Endothelial cell of umbilical vein (primary cell): ENCODE measurements at regions of chr3 and their contacts with region 1.

Region 1: DNA sequence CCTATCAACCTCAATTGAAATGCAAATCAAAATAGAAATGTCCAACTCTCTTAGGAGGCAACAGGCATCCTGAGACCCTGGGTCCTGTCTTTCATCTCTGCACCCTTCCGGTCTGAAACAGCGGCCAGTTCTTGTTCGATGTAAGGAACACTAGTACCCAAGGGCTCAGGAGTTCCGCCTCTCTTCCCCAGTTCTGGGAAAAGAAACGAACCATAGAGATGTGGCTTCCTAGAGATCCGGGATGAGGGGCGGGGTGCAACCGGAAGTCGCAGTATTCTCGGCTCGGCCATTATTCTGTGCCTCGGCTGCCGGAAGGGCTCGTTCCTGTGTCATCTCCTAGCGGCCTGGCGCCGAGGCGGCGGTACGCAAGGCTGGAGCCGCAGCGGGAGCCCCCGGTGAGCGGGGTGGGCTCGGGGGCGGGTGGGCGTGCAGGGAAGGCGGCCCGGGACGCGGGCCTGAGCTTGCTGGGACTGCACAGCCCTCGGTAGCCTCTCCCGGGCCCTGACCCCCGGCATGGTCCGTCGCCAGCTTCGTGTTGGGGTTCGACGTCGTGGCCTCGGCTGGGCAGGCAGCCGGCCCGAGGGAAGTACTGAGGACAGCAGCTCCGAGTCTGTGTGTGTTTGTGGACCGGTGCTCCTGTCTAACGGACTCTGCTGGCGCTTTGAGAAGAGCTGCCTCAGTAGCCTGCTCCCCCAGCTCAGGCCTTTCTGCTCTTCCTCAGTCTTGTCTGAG is at the start of gene ZNF197:
- DNase-seq: peak; percentile 70
- H3K4me3 ChIP-seq: peak within 1 kb of the TSS; percentile 13 to 69 (median 62)
- H3K27ac ChIP-seq: peak within 1 kb of the TSS; percentile 3
- H3K4me1 ChIP-seq: peaks cover 4% of the 10 kb centered on the region
- H3K27me3 ChIP-seq: no peaks in the 10 kb centered on the region
- CTCF ChIP-seq: no peak
- POLR2A ChIP-seq: peak; percentile 80
- total RNA-seq, gene ZNF197: 6.4 and 7.1 TPM in 2 replicates

Region 2: GRCh38 chr3:44477312-44478030 is 147.4 kb before region 1 on chr3 and contains the start of gene ZNF445:
- CTCF ChIA-PET with region 1: no interaction called
- POLR2A ChIA-PET with region 1: no interaction called
- dilution Hi-C with region 1: no loop called
- intact Hi-C with region 1: loop called (anchors 1 kb)
- DNase-seq: peak; percentile 78
- H3K4me3 ChIP-seq: peak within 1 kb of the TSS; percentile 61 to 98 (median 98)
- H3K27ac ChIP-seq: peak within 1 kb of the TSS; percentile 35
- H3K4me1 ChIP-seq: peaks cover 11% of the 10 kb centered on the region
- H3K27me3 ChIP-seq: no peaks in the 10 kb centered on the region
- CTCF ChIP-seq: no peak
- POLR2A ChIP-seq: peak; percentile 79
- total RNA-seq, gene ZNF445: 15.0 and 17.8 TPM in 2 replicates

Region 3: GRCh38 chr3:44510000-44510368 is 114.9 kb before region 1 on chr3:
- CTCF ChIA-PET with region 1: no interaction called
- POLR2A ChIA-PET with region 1: no interaction called
- dilution Hi-C with region 1: no loop called
- intact Hi-C with region 1: loop called (anchors 10 kb)
- DNase-seq: peak; percentile 49
- H3K4me3 ChIP-seq: peak overlapping the region; percentile 80 to 98 (median 88)
- H3K27ac ChIP-seq: peak overlapping the region; percentile 58
- H3K4me1 ChIP-seq: peaks cover 13% of the 10 kb centered on the region
- H3K27me3 ChIP-seq: no peaks in the 10 kb centered on the region
- CTCF ChIP-seq: no peak
- POLR2A ChIP-seq: no peak

Region 4: DNA sequence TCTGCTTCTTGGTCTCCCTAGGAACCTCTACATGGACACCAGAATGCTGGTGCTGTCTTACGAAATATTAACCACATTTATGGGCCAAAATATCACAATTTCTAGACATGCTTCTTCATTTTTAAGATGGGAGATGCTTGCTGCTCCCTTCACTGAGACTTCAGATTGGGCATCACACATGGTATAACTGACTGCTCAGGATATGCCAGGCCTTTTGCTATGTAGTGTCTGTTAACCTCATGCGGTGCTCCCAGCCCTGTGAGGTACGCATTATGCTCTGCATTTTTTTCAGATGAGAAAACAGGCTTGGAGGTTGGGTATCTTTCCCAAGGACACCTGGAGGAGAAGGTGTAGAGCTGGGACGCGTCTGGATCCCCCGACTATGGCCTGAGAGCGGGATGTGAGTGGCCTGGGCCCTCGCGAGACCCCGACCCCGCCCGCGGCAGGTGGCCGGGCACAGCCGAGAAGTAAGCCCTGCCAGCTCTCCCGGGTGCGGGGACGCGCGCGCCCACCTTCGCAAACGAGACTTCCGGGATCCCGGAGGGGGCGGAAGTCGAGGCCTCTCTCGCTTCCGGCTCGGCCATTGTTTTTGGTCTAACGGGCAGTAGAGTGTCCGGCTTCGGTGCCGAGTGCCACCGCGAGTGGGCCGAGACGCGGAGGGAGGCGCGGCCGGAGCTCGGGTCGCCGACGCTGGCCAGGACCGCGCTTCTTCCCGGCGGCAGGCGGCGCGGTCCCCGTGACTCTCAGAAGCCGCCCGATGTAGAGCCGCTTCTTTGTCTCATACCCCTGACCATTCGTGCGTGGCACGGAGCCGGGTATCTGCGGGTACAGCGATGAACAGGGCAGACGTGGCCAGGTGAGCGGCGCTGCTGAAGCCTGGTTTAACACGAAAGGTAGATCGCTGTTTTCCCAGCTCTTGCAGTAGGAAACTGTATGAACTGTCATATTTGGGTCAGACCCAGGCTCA is 70.0 kb before region 1 on chr3 and contains the start of gene ZKSCAN7:
- CTCF ChIA-PET with region 1: interaction called, 3 read pairs
- POLR2A ChIA-PET with region 1: no interaction called
- dilution Hi-C with region 1: no loop called
- intact Hi-C with region 1: loop called (anchors 2 kb)
- DNase-seq: peak; percentile 42
- H3K4me3 ChIP-seq: peak within 1 kb of the TSS; percentile 78 to 87 (median 82)
- H3K27ac ChIP-seq: no peak within 1 kb of the TSS
- H3K4me1 ChIP-seq: peaks cover 11% of the 10 kb centered on the region
- H3K27me3 ChIP-seq: no peaks in the 10 kb centered on the region
- CTCF ChIP-seq: peak in 1 of 2 donors; percentile 39
- POLR2A ChIP-seq: peak; percentile 48
- total RNA-seq, gene ZKSCAN7: 0.95 and 1.9 TPM in 2 replicates

Region 5: GRCh38 chr3:44648564-44649229 is 23.8 kb after region 1 on chr3 and contains the start of gene ZNF35:
- CTCF ChIA-PET with region 1: interaction called, 5 read pairs
- POLR2A ChIA-PET with region 1: interaction called, 4 read pairs
- dilution Hi-C with region 1: no loop called
- intact Hi-C with region 1: loop called (anchors 1 kb)
- DNase-seq: peak; percentile 84
- H3K4me3 ChIP-seq: peak within 1 kb of the TSS; percentile 83 to 97 (median 96)
- H3K27ac ChIP-seq: peak within 1 kb of the TSS; percentile 66
- H3K4me1 ChIP-seq: peaks cover 8% of the 10 kb centered on the region
- H3K27me3 ChIP-seq: no peaks in the 10 kb centered on the region
- CTCF ChIP-seq: no peak
- POLR2A ChIP-seq: peak; percentile 88
- total RNA-seq, gene ZNF35: 9.1 and 11.3 TPM in 2 replicates

Region 6: DNA sequence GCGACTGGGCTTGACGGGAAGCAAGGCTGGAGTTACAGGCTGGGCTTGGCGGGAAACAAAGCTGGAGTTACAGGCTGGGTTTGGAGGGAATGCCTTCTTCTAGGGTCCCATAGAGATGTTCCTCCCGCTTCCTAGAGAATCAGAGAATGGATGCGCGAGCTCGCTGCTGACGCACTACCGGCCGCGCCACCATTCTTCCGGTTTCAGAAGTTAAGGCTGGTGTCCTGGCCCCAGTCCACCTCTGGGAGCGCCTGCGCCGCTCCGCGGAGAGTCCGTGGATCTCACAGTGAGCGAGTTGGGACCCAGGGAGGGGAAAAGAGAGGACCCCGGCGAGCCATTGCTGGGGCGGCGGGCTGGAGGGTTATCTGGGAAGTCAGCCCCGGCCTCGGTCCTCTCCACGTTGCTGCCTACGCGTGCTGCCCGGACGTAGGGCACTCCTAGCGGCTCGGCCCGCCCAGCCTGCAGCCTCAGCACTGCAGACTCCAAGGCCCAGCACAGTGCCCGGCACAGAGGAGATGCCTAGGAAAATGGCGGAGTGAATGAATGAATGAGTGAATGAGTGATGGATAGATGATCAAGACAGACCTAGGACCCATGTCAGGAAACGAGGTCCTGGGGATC is 87.7 kb after region 1 on chr3 and contains the start of gene ZNF502:
- CTCF ChIA-PET with region 1: interaction called, 3 read pairs
- POLR2A ChIA-PET with region 1: no interaction called
- dilution Hi-C with region 1: no loop called
- intact Hi-C with region 1: loop called (anchors 1 kb)
- DNase-seq: peak; percentile 85
- H3K4me3 ChIP-seq: peak within 1 kb of the TSS; percentile 76 to 98 (median 86)
- H3K27ac ChIP-seq: peak within 1 kb of the TSS; percentile 58
- H3K4me1 ChIP-seq: no peaks in the 10 kb centered on the region
- H3K27me3 ChIP-seq: no peaks in the 10 kb centered on the region
- CTCF ChIP-seq: peak; percentile 35 to 43
- POLR2A ChIP-seq: no peak
- total RNA-seq, gene ZNF502: 4.1 and 4.2 TPM in 2 replicates

Region 7: GRCh38 chr3:44729384-44729910 is 104.5 kb after region 1 on chr3 and contains the start of gene ZNF501:
- CTCF ChIA-PET with region 1: no interaction called
- POLR2A ChIA-PET with region 1: no interaction called
- dilution Hi-C with region 1: no loop called
- intact Hi-C with region 1: loop called (anchors 1 kb)
- DNase-seq: peak; percentile 83
- H3K4me3 ChIP-seq: peak within 1 kb of the TSS; percentile 67 to 82 (median 72)
- H3K27ac ChIP-seq: peak within 1 kb of the TSS; percentile 27
- H3K4me1 ChIP-seq: no peaks in the 10 kb centered on the region
- H3K27me3 ChIP-seq: no peaks in the 10 kb centered on the region
- CTCF ChIP-seq: no peak
- POLR2A ChIP-seq: peak; percentile 36
- total RNA-seq, gene ZNF501: 2.9 and 3.9 TPM in 2 replicates